ENCODE measurements at regions of chr17 and their contacts with region 1.

Region 1: GRCh38 chr17:17752089-17752820 is 71.0 kb downstream of the RAI1 start:
- DNase-seq: peak; percentile 94 to 98
- H3K4me3 ChIP-seq: peak overlapping the region; percentile 40 to 61
- H3K27ac ChIP-seq: peak overlapping the region; percentile 56 to 77
- H3K4me1 ChIP-seq: peaks cover 7 to 22% of the 10 kb centered on the region in 2 donors
- H3K27me3 ChIP-seq: no peaks in the 10 kb centered on the region
- CTCF ChIP-seq: peak; percentile 4 to 42 (median 33)

Region 2: GRCh38 chr17:17476865-17477467 is 275.3 kb before region 1 on chr17 and contains the start of gene MED9:
- intact Hi-C with region 1: loop called (anchors 10 kb)
- DNase-seq: peak; percentile 66 to 95
- H3K4me3 ChIP-seq: peak within 1 kb of the TSS; percentile 82 to 91
- H3K27ac ChIP-seq: peak within 1 kb of the TSS; percentile 76 to 78
- H3K4me1 ChIP-seq: peaks cover 10 to 11% of the 10 kb centered on the region in 2 donors
- H3K27me3 ChIP-seq: no peaks in the 10 kb centered on the region
- CTCF ChIP-seq: no peak
- total RNA-seq, gene MED9: 16.9 TPM

Region 3: DNA sequence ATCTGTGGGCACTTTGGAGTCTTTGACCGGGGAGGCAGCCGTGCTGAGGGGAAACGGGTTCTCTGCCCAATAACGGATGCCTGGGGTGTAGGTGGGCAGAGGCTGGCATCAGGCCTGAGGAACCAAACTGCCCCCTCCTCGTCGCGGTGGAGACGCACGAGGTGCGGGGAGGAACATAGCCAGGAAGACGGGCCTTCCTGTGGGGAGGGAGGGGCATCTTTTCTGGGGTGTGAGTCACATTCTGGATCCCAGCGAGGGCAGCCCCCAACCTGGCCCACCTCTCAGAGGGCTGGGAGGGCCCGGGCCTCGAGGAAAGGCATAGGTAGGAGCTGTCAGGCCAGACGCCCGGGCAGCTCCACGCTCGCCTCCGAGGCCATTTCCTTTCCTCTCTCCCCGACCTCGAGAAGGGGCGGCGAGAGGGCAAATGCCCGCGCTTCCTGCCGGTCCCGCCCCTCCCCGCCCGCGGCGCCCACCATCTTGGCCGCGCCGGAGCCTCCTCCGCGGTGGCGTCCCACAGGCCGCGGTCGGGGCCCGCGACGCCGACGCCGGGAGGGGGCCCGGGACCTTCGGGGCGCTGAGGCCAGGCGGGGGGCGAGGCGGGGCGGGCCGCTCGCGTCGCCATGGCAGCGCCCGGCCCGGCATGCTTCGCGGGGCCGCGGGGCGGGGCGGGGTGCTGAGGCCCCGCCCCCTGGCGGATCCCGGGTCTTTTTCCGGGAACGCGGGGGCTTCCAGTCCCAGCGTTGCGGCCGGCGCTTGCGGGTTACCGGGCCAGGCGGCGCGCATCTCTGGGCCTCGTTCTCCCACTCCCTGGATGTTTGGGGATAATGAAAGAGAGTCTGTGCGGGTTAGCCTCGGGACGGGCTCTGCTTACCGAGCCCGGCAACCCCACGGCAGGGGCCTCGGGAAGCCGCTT is 57.8 kb before region 1 on chr17:
- intact Hi-C with region 1: loop called (anchors 1 kb)
- DNase-seq: peak; percentile 48 to 88
- H3K4me3 ChIP-seq: peak overlapping the region; percentile 71 to 78
- H3K27ac ChIP-seq: peak overlapping the region; percentile 98 to 99
- H3K4me1 ChIP-seq: peaks cover 6 to 51% of the 10 kb centered on the region in 2 donors
- H3K27me3 ChIP-seq: no peaks in the 10 kb centered on the region
- CTCF ChIP-seq: no peak

Region 4: DNA sequence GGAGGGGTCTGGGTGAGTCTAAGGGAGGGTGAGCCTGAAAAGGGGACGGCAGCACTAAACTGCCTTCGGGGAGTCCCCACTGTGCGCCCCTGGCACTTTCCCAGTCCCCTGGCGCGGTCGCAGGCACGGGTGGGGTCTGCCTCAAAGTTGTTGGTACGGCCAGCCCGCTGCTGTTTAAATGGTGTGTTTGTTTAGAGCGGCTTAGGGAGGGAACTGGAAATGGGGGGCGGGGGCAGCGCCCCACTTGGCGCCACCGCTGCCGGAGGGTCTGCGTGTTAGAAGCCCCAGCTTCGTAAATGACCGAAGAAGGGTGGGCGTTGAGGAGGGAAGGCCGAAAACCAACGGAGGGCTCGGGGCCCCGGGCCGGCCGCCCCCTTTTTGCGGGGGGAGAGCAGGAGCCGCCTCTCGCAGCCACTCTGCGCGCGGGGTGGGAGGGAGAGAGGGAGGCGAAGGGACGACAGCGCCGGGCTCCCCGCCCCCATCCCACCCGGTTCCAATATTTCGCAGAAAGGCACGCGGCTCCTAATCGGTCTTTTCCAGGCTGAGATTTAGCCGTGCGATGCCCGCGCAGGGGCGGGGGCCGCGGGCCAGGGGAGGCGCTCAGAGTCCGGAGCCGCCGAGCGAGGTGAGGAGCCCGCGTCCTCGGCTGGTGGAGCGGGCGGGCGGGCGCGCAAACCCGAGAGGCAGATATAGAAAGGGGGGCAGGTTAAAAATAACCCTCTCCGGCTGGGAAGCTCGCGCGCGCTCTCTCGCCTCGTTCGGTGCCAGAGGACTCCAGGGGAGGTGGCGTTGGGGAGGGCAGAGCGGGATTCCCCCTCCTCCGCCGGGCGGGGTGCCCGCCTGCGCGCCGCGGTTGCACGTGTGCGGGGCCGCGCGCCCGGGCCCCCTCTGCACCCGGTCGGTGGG is 29.6 kb after region 1 on chr17:
- intact Hi-C with region 1: loop called (anchors 1 kb)
- DNase-seq: peak in 1 of 2 donors; percentile 85
- H3K4me3 ChIP-seq: peak overlapping the region; percentile 60 to 76
- H3K27ac ChIP-seq: peak overlapping the region; percentile 82 to 83
- H3K4me1 ChIP-seq: peaks cover 12 to 22% of the 10 kb centered on the region in 2 donors
- H3K27me3 ChIP-seq: no peaks in the 10 kb centered on the region
- CTCF ChIP-seq: no peak

Region 5: GRCh38 chr17:17836250-17836817 is 84.1 kb after region 1 on chr17:
- intact Hi-C with region 1: loop called (anchors 5 kb)
- DNase-seq: peak; percentile 90 to 98
- H3K4me3 ChIP-seq: peak overlapping the region; percentile 62 to 73
- H3K27ac ChIP-seq: peak overlapping the region; percentile 93 to 98
- H3K4me1 ChIP-seq: peaks cover 19 to 52% of the 10 kb centered on the region in 2 donors
- H3K27me3 ChIP-seq: no peaks in the 10 kb centered on the region
- CTCF ChIP-seq: no peak

Measured in ascending aorta (tissue), 2 donors.